ENCODE measurements at regions of chr13 and their contacts with region 1.

Region 1: DNA sequence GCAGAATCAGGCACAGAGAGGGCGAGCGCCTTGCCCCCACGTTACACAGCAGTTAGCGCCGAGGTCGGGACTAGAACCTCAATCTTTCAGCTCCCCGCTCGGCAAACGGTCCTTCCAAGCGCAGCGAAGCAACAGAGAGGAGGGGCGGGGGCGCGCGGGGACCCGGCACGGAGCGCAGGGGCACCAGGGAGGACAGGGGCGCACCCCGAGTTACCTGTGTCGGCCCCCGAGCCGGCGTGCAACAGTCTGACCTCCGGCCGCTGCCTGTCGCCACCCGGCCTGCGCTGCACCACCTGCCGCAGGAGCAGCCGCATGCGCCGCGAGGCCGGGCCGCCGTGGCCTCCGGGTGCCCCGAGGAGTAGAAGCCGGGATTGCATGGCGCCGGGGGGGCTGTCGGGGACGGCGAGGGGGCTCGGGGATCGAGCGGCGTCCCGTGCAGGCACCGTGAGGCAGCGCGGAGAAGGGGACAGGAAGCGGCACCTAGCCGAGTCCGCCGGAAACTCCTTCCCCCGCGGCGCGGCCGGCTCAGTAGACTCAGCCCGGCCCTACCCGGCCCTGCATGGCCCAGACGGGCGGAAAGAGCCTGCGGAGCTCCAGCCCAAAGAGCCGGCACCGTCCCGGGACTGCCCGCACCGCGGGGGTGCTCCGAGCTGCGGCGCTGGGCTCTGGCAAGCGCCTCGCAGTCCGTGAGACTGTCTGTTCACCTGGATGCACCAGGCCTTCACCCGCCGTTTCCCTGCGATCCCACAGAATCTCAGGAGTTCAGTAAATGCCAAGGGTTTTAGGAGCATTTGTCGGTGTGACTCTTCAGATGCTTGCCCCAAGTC is at the start of gene VWA8:
- DNase-seq: peak; percentile 72 to 91 (median 82)
- ATAC-seq: peak; percentile 96
- H3K4me3 ChIP-seq: peak within 1 kb of the TSS; percentile 90
- H3K4me3 Mint-ChIP-seq: peak within 1 kb of the TSS; percentile 92
- H3K27ac ChIP-seq: peak within 1 kb of the TSS; percentile 39 to 82
- H3K27ac Mint-ChIP-seq: peak within 1 kb of the TSS; percentile 94
- H3K4me1 ChIP-seq: peaks cover 21% of the 10 kb centered on the region
- H3K4me1 Mint-ChIP-seq: peaks cover 54% of the 10 kb centered on the region
- H3K27me3 ChIP-seq: no peaks in the 10 kb centered on the region
- H3K27me3 Mint-ChIP-seq: no peaks in the 10 kb centered on the region
- CTCF ChIP-seq: no peak
- total RNA-seq, gene VWA8: 18.7 to 19.0 TPM

Region 2: GRCh38 chr13:41916173-41916954 is 44.5 kb before region 1 on chr13:
- CTCF ChIA-PET with region 1: no interaction called
- POLR2A ChIA-PET with region 1: interaction called, 3 read pairs
- intact Hi-C with region 1: loop called in 1 of 2 experiments (anchors 1 kb)
- DNase-seq: peak in 3 of 14 experiments; percentile 24 to 66 (median 34)
- ATAC-seq: peak; percentile 80
- H3K4me3 ChIP-seq: no peak overlapping the region
- H3K4me3 Mint-ChIP-seq: peak overlapping the region; percentile 39
- H3K27ac ChIP-seq: no peak overlapping the region
- H3K27ac Mint-ChIP-seq: peak overlapping the region; percentile 47
- H3K4me1 ChIP-seq: peaks cover 10% of the 10 kb centered on the region
- H3K4me1 Mint-ChIP-seq: peaks cover 57% of the 10 kb centered on the region
- H3K27me3 ChIP-seq: no peaks in the 10 kb centered on the region
- H3K27me3 Mint-ChIP-seq: no peaks in the 10 kb centered on the region
- CTCF ChIP-seq: no peak

Region 3: DNA sequence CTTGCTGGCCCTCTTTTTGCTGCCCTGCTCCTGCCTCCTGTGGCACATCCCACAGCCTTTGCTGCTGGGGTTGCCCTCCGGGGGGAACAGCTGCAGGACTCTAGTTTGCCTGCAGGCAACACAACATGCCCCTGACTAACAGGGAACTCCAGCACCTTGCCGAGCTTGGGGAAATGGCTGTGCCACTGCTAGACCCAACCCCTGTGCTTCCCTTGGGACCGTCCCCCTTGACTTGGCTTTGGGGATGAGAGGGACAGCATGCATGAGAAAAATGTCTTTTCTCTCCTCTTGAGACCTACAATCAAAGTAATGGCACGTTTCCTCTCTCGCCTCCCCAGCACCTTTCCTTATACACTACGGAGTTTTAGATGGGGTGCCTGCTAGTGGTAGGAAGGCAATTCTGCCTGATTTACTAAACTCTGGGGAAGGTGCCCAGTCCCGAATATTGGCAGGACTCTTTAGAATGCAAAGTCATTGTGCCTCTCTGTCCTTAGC is 12.4 kb after region 1 on chr13:
- CTCF ChIA-PET with region 1: no interaction called
- POLR2A ChIA-PET with region 1: interaction called, 13 read pairs
- intact Hi-C with region 1: no loop called
- DNase-seq: no peak
- ATAC-seq: no peak
- H3K4me3 ChIP-seq: no peak overlapping the region
- H3K4me3 Mint-ChIP-seq: no peak overlapping the region
- H3K27ac ChIP-seq: no peak overlapping the region
- H3K27ac Mint-ChIP-seq: no peak overlapping the region
- H3K4me1 ChIP-seq: peaks cover 22% of the 10 kb centered on the region
- H3K4me1 Mint-ChIP-seq: peaks cover 17% of the 10 kb centered on the region
- H3K27me3 ChIP-seq: no peaks in the 10 kb centered on the region
- H3K27me3 Mint-ChIP-seq: no peaks in the 10 kb centered on the region
- CTCF ChIP-seq: no peak

Region 4: GRCh38 chr13:41985788-41986508 is 25.1 kb after region 1 on chr13:
- CTCF ChIA-PET with region 1: no interaction called
- POLR2A ChIA-PET with region 1: no interaction called
- intact Hi-C with region 1: no loop called
- DNase-seq: no peak
- ATAC-seq: no peak
- H3K4me3 ChIP-seq: no peak overlapping the region
- H3K4me3 Mint-ChIP-seq: no peak overlapping the region
- H3K27ac ChIP-seq: no peak overlapping the region
- H3K27ac Mint-ChIP-seq: no peak overlapping the region
- H3K4me1 ChIP-seq: no peaks in the 10 kb centered on the region
- H3K4me1 Mint-ChIP-seq: no peaks in the 10 kb centered on the region
- H3K27me3 ChIP-seq: no peaks in the 10 kb centered on the region
- H3K27me3 Mint-ChIP-seq: peaks cover 11% of the 10 kb centered on the region
- CTCF ChIP-seq: no peak

Region 5: GRCh38 chr13:42039946-42040729 is 79.3 kb after region 1 on chr13:
- CTCF ChIA-PET with region 1: interaction called, 3 read pairs
- POLR2A ChIA-PET with region 1: interaction called, 6 read pairs
- intact Hi-C with region 1: loop called (anchors 2 to 5 kb)
- DNase-seq: peak; percentile 75 to 96 (median 88)
- ATAC-seq: peak; percentile 82
- H3K4me3 ChIP-seq: peak overlapping the region; percentile 83
- H3K4me3 Mint-ChIP-seq: peak overlapping the region; percentile 87
- H3K27ac ChIP-seq: peak overlapping the region; percentile 53 to 68
- H3K27ac Mint-ChIP-seq: peak overlapping the region; percentile 85
- H3K4me1 ChIP-seq: peaks cover 20% of the 10 kb centered on the region
- H3K4me1 Mint-ChIP-seq: peaks cover 19% of the 10 kb centered on the region
- H3K27me3 ChIP-seq: no peaks in the 10 kb centered on the region
- H3K27me3 Mint-ChIP-seq: no peaks in the 10 kb centered on the region
- CTCF ChIP-seq: no peak

Region 6: GRCh38 chr13:42048682-42049453 is 88.0 kb after region 1 on chr13:
- CTCF ChIA-PET with region 1: no interaction called
- POLR2A ChIA-PET with region 1: interaction called, 5 read pairs
- intact Hi-C with region 1: loop called in 1 of 2 experiments (anchors 5 kb)
- DNase-seq: peak in 13 of 14 experiments; percentile 32 to 78 (median 51)
- ATAC-seq: peak; percentile 59
- H3K4me3 ChIP-seq: peak overlapping the region; percentile 82
- H3K4me3 Mint-ChIP-seq: peak overlapping the region; percentile 89
- H3K27ac ChIP-seq: no peak overlapping the region
- H3K27ac Mint-ChIP-seq: no peak overlapping the region
- H3K4me1 ChIP-seq: peaks cover 17% of the 10 kb centered on the region
- H3K4me1 Mint-ChIP-seq: peaks cover 29% of the 10 kb centered on the region
- H3K27me3 ChIP-seq: no peaks in the 10 kb centered on the region
- H3K27me3 Mint-ChIP-seq: no peaks in the 10 kb centered on the region
- CTCF ChIP-seq: no peak

Measured in CD4-positive, alpha-beta T cell (primary cell).